Activated naive CD8-positive, alpha-beta T cell treated with anti-CD3 and anti-CD28 coated beads, Interleukin-2, amount 10 ng/mL, durations not matched to agents 7 days and 5 days (primary cell): ENCODE measurements at regions of chr6 and their contacts with region 1.

Region 1: DNA sequence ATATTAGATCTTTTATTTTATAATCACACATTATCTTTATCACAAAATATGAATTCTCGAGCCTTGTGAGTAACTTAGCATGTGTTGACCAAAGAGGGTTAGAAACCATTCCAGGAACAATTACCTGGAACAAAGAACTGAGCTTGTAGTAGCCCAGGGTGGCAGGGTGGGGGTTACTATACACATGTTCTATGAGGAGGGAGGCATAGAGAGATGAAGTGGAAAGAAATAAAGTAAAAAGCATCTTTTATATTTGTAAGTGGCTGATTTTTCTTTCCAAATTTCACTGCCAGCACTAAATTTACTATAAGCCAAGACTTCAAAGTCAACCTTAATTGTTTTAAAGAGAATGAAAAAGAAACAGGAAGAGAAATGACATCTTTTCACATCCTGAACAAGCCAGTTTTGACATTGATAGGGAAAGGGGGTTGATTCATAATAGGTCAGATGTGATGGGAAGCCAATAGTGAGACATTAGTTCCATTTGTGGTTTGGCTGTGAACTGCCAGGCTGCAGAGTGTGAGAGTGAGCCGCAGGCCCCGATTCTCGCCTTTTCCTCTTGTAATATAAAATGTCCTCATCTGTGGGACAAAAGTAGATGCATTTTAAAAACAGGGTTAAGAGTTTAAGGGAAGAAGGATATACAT is 52.7 kb upstream of the MYB start:
- DNase-seq: peak; percentile 47
- ATAC-seq: peak; percentile 93
- H3K4me3 Mint-ChIP-seq: peak overlapping the region; percentile 79
- H3K27ac Mint-ChIP-seq: peak overlapping the region; percentile 94
- H3K4me1 Mint-ChIP-seq: peaks cover 38% of the 10 kb centered on the region
- H3K27me3 Mint-ChIP-seq: no peaks in the 10 kb centered on the region

Region 2: DNA sequence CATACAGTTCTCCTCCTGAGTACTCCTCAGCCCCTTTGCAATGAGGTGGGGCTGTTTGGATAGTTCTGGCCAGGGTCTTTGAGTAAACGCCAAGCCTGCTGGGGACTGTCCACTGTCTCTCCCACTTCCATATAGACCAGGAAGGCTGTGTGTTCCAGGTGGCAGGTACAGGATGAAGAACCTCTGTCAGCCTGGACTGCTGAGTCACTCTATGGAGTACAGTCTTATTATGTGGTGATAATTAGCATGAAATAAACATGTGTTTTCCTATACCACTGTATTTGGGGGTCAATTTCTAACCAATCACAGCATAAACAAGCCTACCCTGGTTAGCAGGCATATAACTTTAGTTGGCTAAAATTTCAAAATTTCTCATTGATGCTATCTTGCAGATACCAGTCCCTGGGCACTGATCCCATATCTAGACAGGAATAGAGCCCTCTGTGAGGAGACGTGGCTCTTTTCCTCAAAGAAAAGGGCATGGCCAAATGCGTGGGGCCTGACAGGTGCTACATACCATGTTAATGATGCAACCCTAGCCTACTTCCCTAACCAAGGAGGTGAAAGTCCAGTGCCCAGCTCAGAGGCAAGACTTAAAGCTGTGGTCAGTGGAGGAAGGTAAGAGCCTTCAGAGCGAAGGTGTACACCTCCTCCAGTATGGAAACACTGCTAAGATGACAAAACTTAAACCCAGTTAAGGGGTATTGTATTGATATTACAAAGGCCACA is 174.0 kb before region 1 on chr6:
- POLR2A ChIA-PET with region 1: no interaction called
- DNase-seq: no peak
- ATAC-seq: no peak
- H3K4me3 Mint-ChIP-seq: no peak overlapping the region
- H3K27ac Mint-ChIP-seq: no peak overlapping the region
- H3K4me1 Mint-ChIP-seq: no peaks in the 10 kb centered on the region
- H3K27me3 Mint-ChIP-seq: no peaks in the 10 kb centered on the region

Region 3: GRCh38 chr6:135014353-135014832 is 114.0 kb before region 1 on chr6:
- POLR2A ChIA-PET with region 1: no interaction called
- DNase-seq: no peak
- ATAC-seq: peak; percentile 89
- H3K4me3 Mint-ChIP-seq: peak overlapping the region; percentile 74
- H3K27ac Mint-ChIP-seq: peak overlapping the region; percentile 93
- H3K4me1 Mint-ChIP-seq: peaks cover 45% of the 10 kb centered on the region
- H3K27me3 Mint-ChIP-seq: no peaks in the 10 kb centered on the region

Region 4: DNA sequence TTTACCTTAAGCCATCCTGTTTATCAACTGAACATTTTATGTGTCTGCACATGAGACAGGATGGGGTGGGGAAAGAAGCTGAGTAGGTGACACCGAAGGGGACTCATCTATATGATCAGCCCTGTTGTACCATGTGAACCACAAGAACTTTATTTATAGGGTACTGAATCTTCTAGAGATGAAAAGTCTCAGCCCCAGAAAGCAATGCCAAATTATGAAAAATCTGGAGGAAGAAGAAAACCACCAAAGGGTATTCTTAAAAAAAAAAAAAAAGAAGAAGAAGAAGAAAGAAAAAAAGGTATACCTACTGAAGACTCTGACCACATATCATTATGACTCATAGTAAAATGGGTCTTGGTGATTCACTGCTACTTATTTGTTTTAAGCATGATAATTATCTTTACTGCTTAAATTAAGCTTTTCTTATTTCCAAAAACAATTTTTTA is 34.0 kb before region 1 on chr6:
- POLR2A ChIA-PET with region 1: no interaction called
- DNase-seq: no peak
- ATAC-seq: peak; percentile 92
- H3K4me3 Mint-ChIP-seq: peak overlapping the region; percentile 44
- H3K27ac Mint-ChIP-seq: peak overlapping the region; percentile 91
- H3K4me1 Mint-ChIP-seq: peaks cover 45% of the 10 kb centered on the region
- H3K27me3 Mint-ChIP-seq: no peaks in the 10 kb centered on the region

Region 5: DNA sequence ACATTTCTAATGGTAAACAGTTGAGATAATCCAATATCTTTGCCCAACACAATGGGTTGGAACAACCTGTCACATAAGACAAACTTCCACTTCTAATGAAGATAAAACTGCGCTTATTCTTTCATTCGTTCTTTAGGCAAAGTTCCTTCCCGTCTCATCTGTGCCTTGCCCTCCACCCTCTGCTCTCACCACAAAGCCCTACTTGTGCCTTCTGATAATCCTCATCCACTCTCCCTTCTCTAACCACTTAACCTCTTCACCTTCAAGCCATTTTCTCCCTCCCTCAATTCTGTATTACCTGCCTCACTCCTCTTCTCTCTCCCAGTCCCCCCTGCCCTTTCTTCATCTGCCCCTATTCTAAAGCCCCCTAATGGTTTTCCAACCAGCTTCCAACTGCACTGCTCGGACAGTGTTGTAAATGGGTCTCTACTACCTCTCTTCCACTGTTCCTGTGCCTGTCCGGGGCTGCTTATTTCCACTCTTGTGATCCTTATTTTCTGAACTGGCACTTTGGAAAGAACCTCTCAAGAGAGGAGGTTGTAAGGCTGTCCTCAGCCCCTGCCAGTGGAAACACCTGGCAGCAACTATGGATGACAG is 10.2 kb before region 1 on chr6:
- POLR2A ChIA-PET with region 1: interaction called, 11 read pairs
- DNase-seq: no peak
- ATAC-seq: no peak
- H3K4me3 Mint-ChIP-seq: no peak overlapping the region
- H3K27ac Mint-ChIP-seq: peak overlapping the region; percentile 18
- H3K4me1 Mint-ChIP-seq: peaks cover 45% of the 10 kb centered on the region
- H3K27me3 Mint-ChIP-seq: no peaks in the 10 kb centered on the region

Region 6: DNA sequence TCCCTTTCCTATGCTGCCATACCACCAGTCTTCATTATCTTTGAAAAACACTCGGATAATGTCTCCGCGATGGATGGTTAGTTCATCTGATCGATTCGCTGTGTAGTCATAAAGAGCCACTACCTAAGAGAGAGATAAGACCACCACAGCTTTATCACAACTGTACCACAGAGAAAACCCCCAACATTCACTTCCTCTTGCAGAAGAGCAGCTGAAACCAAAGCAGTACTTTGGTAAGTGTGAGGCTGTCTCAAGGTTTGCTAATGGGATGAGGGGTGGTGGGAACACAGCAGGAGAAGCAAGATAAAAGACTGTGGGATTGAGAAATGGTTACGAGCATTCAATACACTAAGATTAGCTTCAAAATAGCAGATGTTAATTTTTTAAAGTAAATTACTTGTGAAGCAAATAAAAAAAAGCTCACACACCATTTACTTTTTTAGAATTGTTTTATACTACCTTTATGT is 194.8 kb after region 1 on chr6:
- POLR2A ChIA-PET with region 1: no interaction called
- DNase-seq: no peak
- ATAC-seq: peak; percentile 92
- H3K4me3 Mint-ChIP-seq: peak overlapping the region; percentile 66
- H3K27ac Mint-ChIP-seq: peak overlapping the region; percentile 74
- H3K4me1 Mint-ChIP-seq: peaks cover 25% of the 10 kb centered on the region
- H3K27me3 Mint-ChIP-seq: no peaks in the 10 kb centered on the region